Lower leg skin (tissue), 4 donors: ENCODE measurements at regions of chr13 and their contacts with region 1.

Region 1: DNA sequence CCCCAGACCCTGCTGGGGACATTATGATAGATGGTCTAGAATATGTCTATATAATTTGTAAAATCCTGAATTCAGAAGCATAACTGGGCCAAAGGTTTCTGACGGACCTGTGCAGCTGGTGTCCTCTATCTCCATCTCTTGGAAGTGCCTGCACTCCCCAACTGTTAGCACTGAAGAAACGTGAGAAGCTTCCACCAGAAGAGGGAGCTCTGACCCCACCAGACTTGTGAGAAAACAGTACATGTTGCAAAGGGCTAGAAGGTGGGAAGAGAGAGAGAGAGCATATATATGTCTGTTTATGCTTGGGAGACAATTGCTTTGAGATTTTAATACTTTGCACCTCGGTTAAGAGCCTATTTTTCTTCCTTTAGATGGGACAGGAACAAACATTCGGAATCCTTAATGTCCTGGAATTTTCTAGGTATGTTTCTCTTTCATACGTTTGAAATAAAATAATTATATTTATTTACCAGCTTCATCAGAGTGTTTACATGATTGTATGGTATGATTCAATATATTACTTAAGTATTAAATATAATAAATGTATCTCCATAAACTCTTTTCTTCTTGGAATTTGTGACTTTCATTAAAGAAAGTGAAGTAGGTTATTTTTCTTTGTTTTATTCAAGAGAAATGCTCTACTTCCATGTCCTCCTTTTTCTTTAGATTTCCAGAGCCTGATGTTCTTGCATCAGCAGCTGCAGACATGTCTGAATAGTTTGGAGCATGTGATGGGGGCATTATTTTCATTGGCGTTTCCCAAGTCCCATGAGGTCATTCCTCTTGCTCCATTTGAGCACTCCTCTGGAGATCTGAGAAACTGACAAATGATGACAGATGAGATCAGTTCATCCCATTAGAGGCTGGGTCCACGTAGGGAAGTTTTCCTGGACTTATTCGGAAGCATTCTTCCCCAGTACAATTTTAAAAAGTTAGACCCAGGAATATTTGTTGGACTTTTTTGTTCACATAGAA is 202.9 kb downstream of the ATP8A2 start:
- DNase-seq: peak; percentile 80 to 90
- H3K4me3 ChIP-seq: no peak overlapping the region
- CTCF ChIP-seq: no peak
- POLR2A ChIP-seq: no peak

Region 2: GRCh38 chr13:26062844-26063444 is 488.2 kb after region 1 on chr13:
- intact Hi-C with region 1: loop called (anchors 5 kb)
- DNase-seq: peak in 1 of 2 donors; percentile 25
- H3K4me3 ChIP-seq: no peak overlapping the region
- CTCF ChIP-seq: no peak
- POLR2A ChIP-seq: no peak